Left cardiac atrium (tissue), 4 donors: ENCODE measurements at regions of chr19 and their contacts with region 1.

Region 1: DNA sequence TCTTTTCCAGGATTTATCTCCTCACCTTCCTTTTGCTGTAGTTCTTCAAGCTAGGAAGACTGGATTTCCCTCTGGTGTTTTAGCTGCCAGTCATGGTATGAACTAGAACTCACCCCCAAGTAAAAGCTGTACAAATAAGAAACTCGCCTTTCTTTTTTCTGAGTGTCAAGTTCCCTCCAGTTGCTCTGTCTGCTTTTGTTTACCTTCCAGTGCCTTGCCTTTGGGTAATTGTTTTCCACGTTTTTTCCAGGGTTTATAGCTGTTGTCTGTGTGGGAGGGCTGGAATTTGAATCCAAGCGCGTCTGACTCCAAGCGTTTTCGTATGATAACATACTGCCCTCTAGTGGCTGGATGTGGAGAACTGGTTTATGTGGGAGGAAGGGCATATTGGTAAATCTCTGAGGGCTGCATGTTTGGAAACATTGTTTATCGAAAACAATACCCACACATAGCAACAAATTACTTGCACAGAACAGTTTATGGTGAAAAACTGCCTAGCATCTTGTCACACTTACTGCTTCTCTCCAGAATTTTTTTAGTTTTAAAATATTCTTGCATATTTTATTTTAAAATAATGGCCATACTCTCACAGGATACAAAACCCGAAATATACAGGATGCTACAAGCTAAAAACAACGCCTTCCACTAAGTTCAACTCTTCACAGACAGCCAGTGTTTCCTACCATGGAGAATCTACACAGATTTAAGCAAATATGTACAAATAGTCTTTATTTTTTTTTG is 19.2 kb downstream of the RCN3 start:
- DNase-seq: peak; percentile 73
- ATAC-seq: peak; percentile 81 to 85

Region 2: DNA sequence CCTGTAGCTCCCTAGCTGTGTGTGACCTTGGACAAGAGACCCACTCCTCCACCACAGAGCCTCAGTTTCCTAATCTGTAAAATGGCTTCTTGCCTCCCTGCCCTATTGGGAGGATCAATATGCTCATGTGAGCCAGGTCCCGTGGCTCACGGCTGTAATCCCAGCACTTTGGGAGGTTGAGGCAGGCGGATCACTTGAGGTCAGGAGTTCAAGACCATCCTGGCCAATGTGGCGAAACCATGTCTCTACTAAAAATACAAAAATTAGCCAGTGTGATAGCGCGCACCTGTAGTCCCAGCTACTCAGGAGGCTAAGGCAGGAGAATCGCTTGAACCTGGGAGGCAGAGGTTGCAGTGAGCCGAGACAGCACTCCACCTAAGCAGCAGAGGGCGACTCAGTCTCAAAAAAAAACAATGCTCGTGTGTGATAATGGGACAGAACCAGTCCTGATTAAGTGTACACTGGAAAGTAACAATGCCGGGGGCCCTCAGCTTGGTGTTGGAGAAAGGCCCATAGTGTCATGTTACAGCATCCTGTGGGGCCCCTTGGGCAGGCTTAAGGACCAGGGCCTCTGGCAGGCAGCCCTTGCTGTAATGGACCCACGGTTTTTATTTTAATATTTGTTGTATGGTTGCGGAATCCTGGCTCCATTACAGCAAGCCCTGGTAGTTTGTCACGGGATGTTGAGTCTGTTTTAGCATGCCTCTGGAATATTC is 44.0 kb before region 1 on chr19:
- intact Hi-C with region 1: loop called (anchors 1 to 5 kb)
- DNase-seq: peak; percentile 42
- ATAC-seq: peak; percentile 28 to 49

Region 3: GRCh38 chr19:49595819-49596404 is 48.9 kb after region 1 on chr19:
- intact Hi-C with region 1: no loop called
- DNase-seq: no peak
- ATAC-seq: no peak

Region 4: GRCh38 chr19:49701271-49701786 is 154.3 kb after region 1 on chr19:
- intact Hi-C with region 1: no loop called
- DNase-seq: no peak
- ATAC-seq: peak in 1 of 2 donors; percentile 25